GM23248 (cell line): ENCODE measurements at regions of chr1 and their contacts with region 1.

Region 1: GRCh38 chr1:9942939-9943788 is at the starts of genes LZIC and NMNAT1:
- DNase-seq: peak; percentile 98
- H3K4me3 ChIP-seq: peak within 1 kb of the TSS; percentile 97
- H3K27ac ChIP-seq: peak within 1 kb of the TSS; percentile 73
- H3K4me1 ChIP-seq: peaks cover 6% of the 10 kb centered on the region; the same call in 1 of the 2 replicates
- H3K27me3 ChIP-seq: no peaks in the 10 kb centered on the region
- total RNA-seq, gene LZIC: 21.2 and 24.0 TPM in 2 replicates
- total RNA-seq, gene NMNAT1: 12.5 and 15.2 TPM in 2 replicates

Region 2: GRCh38 chr1:9874959-9875635 is 68.1 kb before region 1 on chr1:
- in situ Hi-C with region 1: loop called (anchors 10 kb)
- DNase-seq: peak; percentile 69
- H3K4me3 ChIP-seq: no peak overlapping the region
- H3K27ac ChIP-seq: no peak overlapping the region
- H3K4me1 ChIP-seq: no peaks in the 10 kb centered on the region
- H3K27me3 ChIP-seq: no peaks in the 10 kb centered on the region